Activated CD4-positive, alpha-beta memory T cell treated with anti-CD3 and anti-CD28 coated beads, Interleukin-2, amount 10 ng/mL, durations not matched to agents 7 days and 5 days (primary cell): ENCODE measurements at regions of chr20 and their contacts with region 1.

Region 1: DNA sequence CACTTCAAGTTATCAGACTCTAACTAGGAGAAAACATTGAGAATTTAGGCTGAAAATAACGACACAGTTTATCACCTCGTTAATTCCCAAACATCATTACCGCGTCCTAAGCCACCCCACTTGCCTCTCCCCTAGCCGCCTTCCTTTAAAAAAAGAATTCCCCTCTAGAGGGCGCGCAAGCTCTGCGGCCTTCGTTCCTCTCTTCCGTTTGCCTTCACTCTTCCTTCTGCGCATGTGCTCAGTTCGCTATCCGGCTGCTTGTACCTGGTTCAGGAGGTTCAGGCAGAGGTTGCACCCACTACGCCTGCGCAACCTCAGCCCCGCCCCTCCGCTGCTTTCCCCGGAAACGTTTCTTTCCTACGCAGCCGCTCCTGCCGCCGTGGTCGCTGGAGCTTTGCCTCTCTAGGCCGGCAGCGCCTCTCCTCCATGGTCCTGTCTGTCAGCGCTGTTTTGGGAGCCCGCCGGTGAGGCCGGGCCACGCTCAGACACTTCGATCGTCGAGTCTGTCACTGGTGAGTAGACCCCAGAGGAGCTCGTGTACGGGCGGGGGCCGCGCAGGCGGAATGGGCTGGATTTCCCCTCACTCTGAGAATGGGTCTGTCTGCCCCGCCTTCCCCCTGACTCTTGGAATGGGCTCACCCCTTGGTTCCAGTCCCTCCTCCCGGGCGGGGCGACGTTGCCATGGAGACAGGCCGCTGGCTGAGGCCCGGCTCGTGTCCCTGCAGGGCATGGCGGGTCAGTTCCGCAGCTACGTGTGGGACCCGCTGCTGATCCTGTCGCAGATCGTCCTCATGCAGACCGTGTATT is at the start of gene SYS1:
- DNase-seq: peak; percentile 98
- H3K4me3 Mint-ChIP-seq: peak within 1 kb of the TSS; percentile 92
- H3K27ac Mint-ChIP-seq: peak within 1 kb of the TSS; percentile 91
- H3K4me1 Mint-ChIP-seq: peaks cover 65% of the 10 kb centered on the region
- H3K27me3 Mint-ChIP-seq: no peaks in the 10 kb centered on the region
- total RNA-seq, gene SYS1: 22.1 to 24.2 TPM

Region 2: GRCh38 chr20:45322952-45323383 is 40.0 kb before region 1 on chr20:
- CTCF ChIA-PET with region 1: interaction called, 15 read pairs
- POLR2A ChIA-PET with region 1: interaction called, 5 read pairs
- DNase-seq: no peak
- H3K4me3 Mint-ChIP-seq: no peak overlapping the region
- H3K27ac Mint-ChIP-seq: no peak overlapping the region
- H3K4me1 Mint-ChIP-seq: peaks cover 30% of the 10 kb centered on the region
- H3K27me3 Mint-ChIP-seq: no peaks in the 10 kb centered on the region

Region 3: DNA sequence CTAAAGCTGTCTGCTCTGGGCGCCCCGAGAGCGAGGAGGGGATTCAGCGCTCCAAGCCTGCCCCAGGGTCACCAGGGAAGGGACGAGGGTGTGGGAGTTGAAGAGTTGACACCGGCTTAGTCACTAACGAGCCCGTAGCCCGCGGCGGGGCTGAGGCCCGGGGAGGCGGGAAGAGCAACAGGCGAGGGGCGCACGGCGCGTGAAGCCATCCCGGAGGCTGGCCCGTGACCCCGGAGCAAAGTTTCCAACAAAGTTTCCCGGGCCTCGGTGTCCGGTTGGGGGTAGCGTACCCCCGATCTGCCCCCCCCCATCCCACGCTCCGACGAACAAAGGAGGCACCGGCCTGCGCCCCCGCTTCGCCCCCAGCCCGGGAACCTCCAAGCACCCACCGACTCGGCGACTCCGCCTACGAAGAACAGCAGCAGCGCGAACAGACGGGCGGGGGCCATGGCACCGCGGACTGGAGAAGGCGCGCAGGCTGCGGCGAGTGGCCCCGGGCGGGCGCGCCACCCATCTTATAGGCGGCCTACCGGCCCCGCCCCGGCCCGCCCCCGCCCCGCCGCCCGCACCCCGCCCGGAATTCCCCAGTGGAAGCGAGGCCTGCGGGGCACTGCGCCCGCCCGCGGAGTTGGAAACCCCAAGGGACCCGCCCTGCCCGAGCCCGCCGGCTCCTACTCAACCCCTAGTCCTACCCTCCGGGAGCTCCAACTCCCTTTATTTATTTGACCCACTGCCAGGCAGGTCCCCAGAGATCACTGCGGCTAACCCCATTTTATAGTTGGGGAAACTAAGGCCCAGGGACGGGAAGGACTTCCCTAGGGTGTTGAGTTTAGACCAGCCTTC is 14.8 kb before region 1 on chr20 and contains the start of gene SDC4:
- CTCF ChIA-PET with region 1: interaction called, 11 read pairs
- POLR2A ChIA-PET with region 1: interaction called, 25 read pairs
- DNase-seq: peak; percentile 70
- H3K4me3 Mint-ChIP-seq: peak within 1 kb of the TSS; percentile 86
- H3K27ac Mint-ChIP-seq: peak within 1 kb of the TSS; percentile 67
- H3K4me1 Mint-ChIP-seq: peaks cover 48% of the 10 kb centered on the region
- H3K27me3 Mint-ChIP-seq: no peaks in the 10 kb centered on the region
- total RNA-seq, gene SDC4: 28.1 to 28.3 TPM

Region 4: GRCh38 chr20:45415774-45416637 is 53.0 kb after region 1 on chr20 and contains the start of gene PIGT:
- CTCF ChIA-PET with region 1: interaction called, 10 read pairs
- POLR2A ChIA-PET with region 1: interaction called, 20 read pairs
- DNase-seq: peak; percentile 91
- H3K4me3 Mint-ChIP-seq: peak within 1 kb of the TSS; percentile 93
- H3K27ac Mint-ChIP-seq: peak within 1 kb of the TSS; percentile 91
- H3K4me1 Mint-ChIP-seq: peaks cover 49% of the 10 kb centered on the region
- H3K27me3 Mint-ChIP-seq: no peaks in the 10 kb centered on the region
- total RNA-seq, gene PIGT: 52.4 to 53.0 TPM

Region 5: GRCh38 chr20:45450097-45450818 is 87.3 kb after region 1 on chr20:
- CTCF ChIA-PET with region 1: interaction called, 33 read pairs
- POLR2A ChIA-PET with region 1: interaction called, 7 read pairs
- DNase-seq: no peak
- H3K4me3 Mint-ChIP-seq: no peak overlapping the region
- H3K27ac Mint-ChIP-seq: no peak overlapping the region
- H3K4me1 Mint-ChIP-seq: peaks cover 10% of the 10 kb centered on the region
- H3K27me3 Mint-ChIP-seq: peaks cover 4% of the 10 kb centered on the region